ENCODE measurements at regions of chr19 and their contacts with region 1.

Region 1: GRCh38 chr19:41746593-41747227 is 8.6 kb upstream of the CEACAM6 start:
- DNase-seq: peak; percentile 48
- H3K4me3 Mint-ChIP-seq: no peak overlapping the region
- H3K27ac Mint-ChIP-seq: no peak overlapping the region
- H3K4me1 Mint-ChIP-seq: no peaks in the 10 kb centered on the region
- H3K27me3 Mint-ChIP-seq: peaks cover 57% of the 10 kb centered on the region

Region 2: DNA sequence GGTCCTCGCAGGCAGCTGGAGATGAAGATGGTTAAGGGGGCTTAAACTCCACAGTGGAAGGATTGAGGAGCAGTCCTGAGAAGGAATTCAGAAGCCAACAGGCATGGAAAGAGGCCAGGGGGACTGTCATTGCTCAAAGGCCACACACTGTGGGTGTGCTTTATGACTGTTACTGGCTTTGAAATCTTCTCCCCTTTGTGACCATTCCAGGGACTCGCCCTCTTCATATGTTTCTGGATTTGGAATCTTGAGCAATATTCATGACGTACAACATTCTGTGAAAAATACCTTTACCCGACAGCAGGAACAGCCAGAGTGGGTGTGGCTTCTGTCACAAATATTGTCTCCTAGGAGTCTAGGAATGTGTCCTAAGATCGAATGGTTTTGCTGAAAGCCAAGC is 75.2 kb before region 1 on chr19:
- CTCF ChIA-PET with region 1: no interaction called
- POLR2A ChIA-PET with region 1: no interaction called
- DNase-seq: no peak
- H3K4me3 Mint-ChIP-seq: no peak overlapping the region
- H3K27ac Mint-ChIP-seq: no peak overlapping the region
- H3K4me1 Mint-ChIP-seq: no peaks in the 10 kb centered on the region
- H3K27me3 Mint-ChIP-seq: peaks cover 40% of the 10 kb centered on the region

Region 3: DNA sequence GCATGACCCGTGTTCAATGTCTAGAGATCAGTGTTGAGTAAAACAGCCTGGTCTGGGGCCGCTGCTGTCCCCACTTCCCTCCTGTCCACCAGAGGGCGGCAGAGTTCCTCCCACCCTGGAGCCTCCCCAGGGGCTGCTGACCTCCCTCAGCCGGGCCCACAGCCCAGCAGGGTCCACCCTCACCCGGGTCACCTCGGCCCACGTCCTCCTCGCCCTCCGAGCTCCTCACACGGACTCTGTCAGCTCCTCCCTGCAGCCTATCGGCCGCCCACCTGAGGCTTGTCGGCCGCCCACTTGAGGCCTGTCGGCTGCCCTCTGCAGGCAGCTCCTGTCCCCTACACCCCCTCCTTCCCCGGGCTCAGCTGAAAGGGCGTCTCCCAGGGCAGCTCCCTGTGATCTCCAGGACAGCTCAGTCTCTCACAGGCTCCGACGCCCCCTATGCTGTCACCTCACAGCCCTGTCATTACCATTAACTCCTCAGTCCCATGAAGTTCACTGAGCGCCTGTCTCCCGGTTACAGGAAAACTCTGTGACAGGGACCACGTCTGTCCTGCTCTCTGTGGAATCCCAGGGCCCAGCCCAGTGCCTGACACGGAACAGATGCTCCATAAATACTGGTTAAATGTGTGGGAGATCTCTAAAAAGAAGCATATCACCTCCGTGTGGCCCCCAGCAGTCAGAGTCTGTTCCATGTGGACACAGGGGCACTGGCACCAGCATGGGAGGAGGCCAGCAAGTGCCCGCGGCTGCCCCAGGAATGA is 39.8 kb before region 1 on chr19:
- CTCF ChIA-PET with region 1: interaction called, 14 read pairs
- POLR2A ChIA-PET with region 1: no interaction called
- DNase-seq: peak; percentile 69
- H3K4me3 Mint-ChIP-seq: peak overlapping the region; percentile 62
- H3K27ac Mint-ChIP-seq: no peak overlapping the region
- H3K4me1 Mint-ChIP-seq: peaks cover 4% of the 10 kb centered on the region
- H3K27me3 Mint-ChIP-seq: peaks cover 14% of the 10 kb centered on the region

Region 4: GRCh38 chr19:41718761-41719160 is 27.9 kb before region 1 on chr19:
- CTCF ChIA-PET with region 1: no interaction called
- POLR2A ChIA-PET with region 1: no interaction called
- DNase-seq: no peak
- H3K4me3 Mint-ChIP-seq: no peak overlapping the region
- H3K27ac Mint-ChIP-seq: no peak overlapping the region
- H3K4me1 Mint-ChIP-seq: no peaks in the 10 kb centered on the region
- H3K27me3 Mint-ChIP-seq: peaks cover 14% of the 10 kb centered on the region

Region 5: DNA sequence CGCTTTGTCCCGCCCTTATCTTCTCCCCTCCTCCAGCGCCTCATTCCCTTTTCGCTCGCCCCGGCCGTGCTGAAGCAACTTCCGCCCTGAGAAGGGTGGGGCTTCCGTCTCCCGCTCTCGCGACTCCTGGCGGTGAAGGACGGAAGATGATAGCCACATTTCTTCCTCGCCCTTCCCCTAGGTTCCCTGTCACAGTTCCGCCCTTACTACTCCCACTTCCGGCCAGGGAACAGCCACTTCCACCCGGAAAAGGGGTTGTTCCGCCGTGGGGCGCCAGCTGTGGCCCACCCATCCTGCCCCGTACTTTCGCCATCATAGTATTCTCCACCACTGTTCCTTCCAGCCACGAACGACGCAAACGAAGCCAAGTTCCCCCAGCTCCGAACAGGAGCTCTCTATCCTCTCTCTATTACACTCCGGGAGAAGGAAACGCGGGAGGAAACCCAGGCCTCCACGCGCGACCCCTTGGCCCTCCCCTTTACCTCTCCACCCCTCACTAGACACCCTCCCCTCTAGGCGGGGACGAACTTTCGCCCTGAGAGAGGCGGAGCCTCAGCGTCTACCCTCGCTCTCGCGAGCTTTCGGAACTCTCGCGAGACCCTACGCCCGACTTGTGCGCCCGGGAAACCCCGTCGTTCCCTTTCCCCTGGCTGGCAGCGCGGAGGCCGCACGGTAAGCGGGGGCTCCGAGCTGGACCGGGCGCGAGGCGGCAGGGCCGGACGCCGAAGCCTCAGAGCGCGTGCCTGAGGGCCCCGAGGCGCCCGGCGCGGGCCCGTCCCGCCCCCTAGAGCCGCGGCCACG is 113.1 kb after region 1 on chr19 and contains the start of gene RPS19:
- CTCF ChIA-PET with region 1: no interaction called
- POLR2A ChIA-PET with region 1: no interaction called
- DNase-seq: peak; percentile 98
- H3K4me3 Mint-ChIP-seq: peak within 1 kb of the TSS; percentile 82
- H3K27ac Mint-ChIP-seq: peak within 1 kb of the TSS; percentile 94
- H3K4me1 Mint-ChIP-seq: peaks cover 45% of the 10 kb centered on the region
- H3K27me3 Mint-ChIP-seq: peaks cover 2% of the 10 kb centered on the region
- total RNA-seq, gene RPS19: 2,625 to 2,652 TPM